Mammary epithelial cell (primary cell): ENCODE measurements at regions of chr5 and their contacts with region 1.

Region 1: GRCh38 chr5:132064738-132065331 is 4.4 kb downstream of the IL3 start:
- DNase-seq: peak; percentile 67
- H3K4me3 ChIP-seq: no peak overlapping the region
- H3K27ac ChIP-seq: no peak overlapping the region
- H3K4me1 ChIP-seq: peaks cover 8% of the 10 kb centered on the region
- H3K27me3 ChIP-seq: no peaks in the 10 kb centered on the region
- CTCF ChIP-seq: peak; percentile 98 to 99

Region 2: GRCh38 chr5:131996207-131997025 is 68.4 kb before region 1 on chr5:
- CTCF ChIA-PET with region 1: no interaction called
- dilution Hi-C with region 1: no loop called
- in situ Hi-C with region 1: no loop called
- intact Hi-C with region 1: no loop called
- DNase-seq: no peak
- H3K4me3 ChIP-seq: no peak overlapping the region
- H3K27ac ChIP-seq: no peak overlapping the region
- H3K4me1 ChIP-seq: no peaks in the 10 kb centered on the region
- H3K27me3 ChIP-seq: peaks cover under 1% of the 10 kb centered on the region
- CTCF ChIP-seq: no peak

Region 3: GRCh38 chr5:132007399-132008165 is 57.3 kb before region 1 on chr5:
- CTCF ChIA-PET with region 1: no interaction called
- dilution Hi-C with region 1: no loop called
- in situ Hi-C with region 1: no loop called
- intact Hi-C with region 1: loop called (anchors 1 kb)
- DNase-seq: peak; percentile 71
- H3K4me3 ChIP-seq: no peak overlapping the region
- H3K27ac ChIP-seq: no peak overlapping the region
- H3K4me1 ChIP-seq: peaks cover 17% of the 10 kb centered on the region
- H3K27me3 ChIP-seq: peaks cover 7% of the 10 kb centered on the region
- CTCF ChIP-seq: peak; percentile 71 to 80

Region 4: DNA sequence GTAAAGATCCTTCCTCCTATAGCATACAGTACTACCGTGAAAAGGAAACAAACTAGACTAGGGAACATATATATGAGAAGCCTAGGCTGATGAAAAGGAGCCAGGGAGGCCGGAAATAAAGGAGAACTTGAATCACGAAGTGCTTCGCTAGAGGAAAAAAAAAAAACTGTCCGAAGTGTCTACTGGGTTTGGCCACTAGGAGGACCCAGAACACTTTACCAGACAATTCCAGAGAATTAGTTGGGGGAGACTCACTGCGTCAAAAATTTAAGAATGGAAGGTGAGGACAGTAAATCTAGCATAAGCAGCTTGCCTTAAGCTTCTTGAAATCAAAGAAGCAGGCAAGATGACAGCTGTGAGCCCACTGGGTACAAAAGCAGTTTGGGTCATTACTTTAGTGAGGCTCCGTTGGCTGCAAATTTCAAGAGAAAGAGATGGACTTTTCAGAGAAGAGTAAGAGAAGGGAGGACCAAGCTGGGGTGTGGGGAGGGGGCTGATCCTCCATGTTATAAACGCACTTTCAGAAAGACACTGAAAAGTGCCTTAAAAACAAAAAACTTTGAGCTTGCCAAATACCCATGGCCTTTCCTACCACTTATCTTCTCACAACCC is 115.4 kb after region 1 on chr5:
- CTCF ChIA-PET with region 1: no interaction called
- dilution Hi-C with region 1: no loop called
- in situ Hi-C with region 1: loop called (anchors 5 to 10 kb)
- intact Hi-C with region 1: loop called (anchors 1 kb)
- DNase-seq: peak; percentile 63
- H3K4me3 ChIP-seq: no peak overlapping the region
- H3K27ac ChIP-seq: no peak overlapping the region
- H3K4me1 ChIP-seq: peaks cover 22% of the 10 kb centered on the region
- H3K27me3 ChIP-seq: no peaks in the 10 kb centered on the region
- CTCF ChIP-seq: peak; percentile 79 to 87

Region 5: GRCh38 chr5:132238169-132238744 is 173.4 kb after region 1 on chr5:
- CTCF ChIA-PET with region 1: no interaction called
- dilution Hi-C with region 1: no loop called
- in situ Hi-C with region 1: no loop called
- intact Hi-C with region 1: loop called (anchors 1 kb)
- DNase-seq: peak; percentile 50
- H3K4me3 ChIP-seq: no peak overlapping the region
- H3K27ac ChIP-seq: no peak overlapping the region
- H3K4me1 ChIP-seq: peaks cover 12% of the 10 kb centered on the region
- H3K27me3 ChIP-seq: no peaks in the 10 kb centered on the region
- CTCF ChIP-seq: peak; percentile 76 to 89

Region 6: GRCh38 chr5:132386644-132387286 is 321.9 kb after region 1 on chr5:
- CTCF ChIA-PET with region 1: no interaction called
- dilution Hi-C with region 1: no loop called
- in situ Hi-C with region 1: loop called in 1 of 2 experiments (anchors 10 kb)
- intact Hi-C with region 1: loop called (anchors 2 kb)
- DNase-seq: peak; percentile 58
- H3K4me3 ChIP-seq: no peak overlapping the region
- H3K27ac ChIP-seq: no peak overlapping the region
- H3K4me1 ChIP-seq: peaks cover 47% of the 10 kb centered on the region
- H3K27me3 ChIP-seq: no peaks in the 10 kb centered on the region
- CTCF ChIP-seq: peak; percentile 75 to 84

Region 7: DNA sequence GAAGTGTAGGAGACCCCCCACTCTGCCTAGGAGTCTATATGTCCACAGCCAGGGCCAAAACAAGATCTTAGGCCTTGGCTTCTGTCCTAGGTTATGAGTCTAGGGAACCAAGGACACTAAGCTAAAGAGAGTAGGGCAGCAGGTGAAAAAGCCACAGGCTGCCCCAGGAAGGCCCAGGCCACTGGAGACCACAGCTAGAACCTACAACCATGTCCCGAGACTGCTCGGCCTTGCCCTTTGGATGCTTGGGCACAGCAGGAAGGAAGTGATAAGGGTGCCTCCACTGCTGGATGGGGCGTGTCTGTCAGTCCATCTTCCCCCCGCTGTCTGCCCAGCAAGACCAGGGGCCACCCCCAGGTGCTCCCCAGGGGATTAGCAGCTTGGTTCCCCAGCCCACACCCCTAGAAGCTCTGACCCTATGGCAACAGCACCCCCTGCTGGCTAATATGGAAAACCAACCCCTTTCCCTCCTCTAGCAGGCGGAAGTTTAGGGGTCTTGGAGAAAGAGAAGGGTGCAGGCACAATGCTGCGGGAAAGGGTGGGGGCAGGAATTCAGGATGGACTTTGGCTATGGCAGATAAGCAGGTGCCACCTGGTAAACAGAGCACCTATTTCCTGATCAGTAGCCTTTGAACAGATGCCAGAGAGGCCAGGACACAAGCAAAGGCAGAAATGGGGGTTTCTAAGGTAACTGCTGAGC is 436.2 kb after region 1 on chr5:
- CTCF ChIA-PET with region 1: interaction called, 3 read pairs
- dilution Hi-C with region 1: no loop called
- in situ Hi-C with region 1: loop called in 1 of 2 experiments (anchors 25 kb)
- intact Hi-C with region 1: loop called (anchors 1 kb)
- DNase-seq: no peak
- H3K4me3 ChIP-seq: no peak overlapping the region
- H3K27ac ChIP-seq: no peak overlapping the region
- H3K4me1 ChIP-seq: peaks cover 19% of the 10 kb centered on the region
- H3K27me3 ChIP-seq: no peaks in the 10 kb centered on the region
- CTCF ChIP-seq: peak; percentile 75 to 85